ENCODE measurements at regions of chr6 and their contacts with region 1.

Region 1: DNA sequence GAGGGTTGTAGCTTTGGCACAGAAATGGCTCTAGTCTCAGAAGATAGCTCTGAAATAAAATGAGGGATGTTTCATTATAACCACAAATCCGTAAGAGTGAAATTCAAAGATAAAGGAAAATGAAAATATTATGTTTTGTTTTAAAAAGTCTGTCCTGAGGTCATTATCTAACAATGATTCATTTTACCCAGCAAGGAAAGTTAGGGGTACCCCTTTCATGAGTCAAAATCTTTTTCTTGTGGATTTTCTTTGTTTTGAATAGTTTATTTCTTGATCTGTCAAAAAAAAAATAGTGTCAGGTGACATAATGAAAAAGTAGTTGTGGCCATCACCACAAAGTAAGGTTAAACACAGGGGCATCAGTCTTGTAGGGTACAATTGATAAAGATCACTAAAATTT is 59.7 kb upstream of the MYB start:
- DNase-seq: no peak
- CTCF ChIP-seq: no peak

Region 2: GRCh38 chr6:135135835-135136234 is 14.4 kb after region 1 on chr6:
- CTCF ChIA-PET with region 1: interaction called, 10 read pairs
- POLR2A ChIA-PET with region 1: no interaction called
- DNase-seq: no peak
- CTCF ChIP-seq: no peak

Region 3: GRCh38 chr6:135291288-135292116 is 170.1 kb after region 1 on chr6:
- CTCF ChIA-PET with region 1: no interaction called
- POLR2A ChIA-PET with region 1: no interaction called
- DNase-seq: no peak
- CTCF ChIP-seq: no peak

Measured in GM10248 (cell line).